Tibial artery (tissue), 4 donors: ENCODE measurements at regions of chr15 and their contacts with region 1.

Region 1: GRCh38 chr15:78131295-78132061 is at the start of gene CIB2:
- DNase-seq: peak in 1 of 2 donors; percentile 76
- H3K4me3 ChIP-seq: peak within 1 kb of the TSS; percentile 70 to 78
- H3K27ac ChIP-seq: peak within 1 kb of the TSS; percentile 80 to 82
- H3K4me1 ChIP-seq: peaks cover 0 to 19% (median 9%) of the 10 kb centered on the region in 4 donors
- H3K27me3 ChIP-seq: no peaks in the 10 kb centered on the region
- CTCF ChIP-seq: peak; percentile 80 to 91

Region 2: GRCh38 chr15:78177447-78177873 is 46.0 kb after region 1 on chr15:
- intact Hi-C with region 1: no loop called
- DNase-seq: no peak
- H3K4me3 ChIP-seq: no peak overlapping the region
- H3K27ac ChIP-seq: no peak overlapping the region
- H3K4me1 ChIP-seq: no peaks in the 10 kb centered on the region
- H3K27me3 ChIP-seq: no peaks in the 10 kb centered on the region
- CTCF ChIP-seq: peak; percentile 15 to 20

Region 3: DNA sequence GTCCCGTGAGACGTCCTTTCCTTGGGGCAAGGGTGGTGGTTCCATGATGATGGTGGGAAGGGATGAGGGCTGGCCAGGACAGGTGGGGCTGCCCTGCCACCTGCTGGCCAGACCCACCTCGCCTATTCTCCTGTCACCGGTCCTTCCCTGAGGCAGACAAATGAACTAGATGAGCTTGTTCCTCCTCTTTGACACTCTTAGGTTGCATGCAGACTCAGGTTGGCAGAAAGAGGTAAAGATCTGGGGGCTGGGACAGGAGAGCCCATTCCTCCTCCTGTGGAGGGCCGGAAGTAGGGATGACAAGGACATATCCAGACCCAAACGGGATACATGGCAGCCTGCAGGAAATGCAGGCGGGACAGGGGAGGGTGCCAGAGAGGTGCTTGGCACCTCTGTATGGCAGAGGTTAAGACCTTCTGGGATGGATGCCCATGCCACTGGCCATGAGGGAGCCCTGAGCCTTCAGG is 64.3 kb after region 1 on chr15:
- intact Hi-C with region 1: loop called (anchors 5 kb)
- DNase-seq: no peak
- H3K4me3 ChIP-seq: no peak overlapping the region
- H3K27ac ChIP-seq: no peak overlapping the region
- H3K4me1 ChIP-seq: no peaks in the 10 kb centered on the region
- H3K27me3 ChIP-seq: no peaks in the 10 kb centered on the region
- CTCF ChIP-seq: peak; percentile 82 to 83

Region 4: GRCh38 chr15:78422571-78423340 is 291.3 kb after region 1 on chr15:
- intact Hi-C with region 1: loop called (anchors 10 kb)
- DNase-seq: peak in 1 of 2 donors; percentile 38
- H3K4me3 ChIP-seq: no peak overlapping the region
- H3K27ac ChIP-seq: no peak overlapping the region
- H3K4me1 ChIP-seq: no peaks in the 10 kb centered on the region
- H3K27me3 ChIP-seq: peaks cover 0 to 22% of the 10 kb centered on the region in 2 donors
- CTCF ChIP-seq: peak; percentile 73 to 87